ENCODE measurements at regions of chr6 and their contacts with region 1.

Region 1: DNA sequence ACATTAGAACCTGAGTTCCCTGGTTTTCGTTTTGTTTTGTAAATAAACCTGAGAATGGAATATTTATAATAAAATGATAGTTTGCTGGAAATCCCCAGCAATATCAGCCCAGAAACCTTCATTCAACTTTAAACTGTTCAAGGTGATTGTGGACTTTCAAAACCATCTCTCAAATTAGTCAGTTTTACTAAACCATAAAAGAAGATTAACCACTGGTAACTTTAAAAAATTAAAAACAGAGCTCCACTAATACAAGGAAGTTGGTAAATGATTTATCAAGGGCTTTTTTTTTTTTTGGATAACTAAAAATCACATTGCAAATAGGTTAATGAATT is 10.0 kb downstream of the MBOAT1 start:
- DNase-seq: no peak
- ATAC-seq: no peak

Region 2: GRCh38 chr6:20126789-20127653 is 75.3 kb before region 1 on chr6:
- intact Hi-C with region 1: loop called (anchors 10 kb)
- DNase-seq: peak; percentile 85
- ATAC-seq: peak; percentile 93

Region 3: GRCh38 chr6:20325641-20326421 is 123.5 kb after region 1 on chr6:
- intact Hi-C with region 1: no loop called
- DNase-seq: no peak
- ATAC-seq: no peak

Measured in left ventricle myocardium superior (tissue), 1 donor.